ENCODE measurements at regions of chr4 and their contacts with region 1.

Region 1: DNA sequence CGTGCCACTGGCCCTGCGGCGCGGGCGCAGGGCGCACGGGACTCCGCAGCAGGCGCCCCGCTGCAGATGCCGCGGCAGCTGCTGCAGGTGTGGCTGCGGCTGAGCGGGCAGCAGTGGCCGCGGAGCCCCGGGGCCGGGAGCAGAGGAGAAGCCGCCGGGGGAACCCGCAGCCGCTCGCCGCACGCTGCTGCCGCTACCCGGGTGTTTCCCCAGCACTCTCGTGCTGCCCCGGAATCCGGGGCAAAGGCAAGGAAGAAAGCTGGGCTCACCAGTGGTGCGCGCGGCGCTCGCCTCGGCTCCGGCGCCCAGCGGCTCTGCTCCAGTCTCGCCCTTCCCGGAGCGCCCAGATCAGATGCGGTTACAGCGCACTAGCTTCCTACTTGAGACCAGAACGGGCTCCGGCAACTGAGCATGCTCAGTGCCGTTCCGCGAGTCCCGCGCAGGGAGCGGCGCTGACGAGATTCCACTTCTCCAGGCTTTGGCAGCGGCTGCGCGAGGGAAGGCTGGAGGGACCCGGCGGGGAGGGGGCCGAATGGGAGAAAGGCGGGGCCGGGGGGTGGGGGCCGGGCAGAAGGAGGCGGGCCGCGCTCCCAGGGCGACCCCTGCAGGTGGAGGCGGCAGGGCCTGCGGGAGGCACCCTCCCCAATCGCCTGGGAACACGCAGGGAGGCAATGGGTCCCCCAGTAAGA is at the start of gene APBB2:
- DNase-seq: peak; percentile 94 to 96
- ATAC-seq: peak; percentile 85 to 92 (median 89)
- H3K4me3 ChIP-seq: peak within 1 kb of the TSS; percentile 78
- H3K27ac ChIP-seq: peak within 1 kb of the TSS; percentile 69
- H3K4me1 ChIP-seq: peaks cover 10% of the 10 kb centered on the region
- H3K27me3 ChIP-seq: no peaks in the 10 kb centered on the region
- CTCF ChIP-seq: peak; percentile 84
- total RNA-seq, gene APBB2: 7.8 to 37.4 (median 12.7) TPM

Region 2: GRCh38 chr4:39657465-39657864 is 1556.8 kb before region 1 on chr4:
- intact Hi-C with region 1: no loop called
- DNase-seq: no peak
- ATAC-seq: no peak
- H3K4me3 ChIP-seq: no peak overlapping the region
- H3K27ac ChIP-seq: no peak overlapping the region
- H3K4me1 ChIP-seq: no peaks in the 10 kb centered on the region
- H3K27me3 ChIP-seq: no peaks in the 10 kb centered on the region
- CTCF ChIP-seq: no peak

Region 3: GRCh38 chr4:40916880-40917279 is 297.4 kb before region 1 on chr4:
- intact Hi-C with region 1: loop called in 1 of 2 experiments (anchors 5 kb)
- DNase-seq: peak; percentile 53 to 65
- ATAC-seq: peak; percentile 75 to 86 (median 81)
- H3K4me3 ChIP-seq: peak overlapping the region; percentile 19
- H3K27ac ChIP-seq: peak overlapping the region; percentile 81
- H3K4me1 ChIP-seq: peaks cover 37% of the 10 kb centered on the region
- H3K27me3 ChIP-seq: no peaks in the 10 kb centered on the region
- CTCF ChIP-seq: peak; percentile 45

Region 4: GRCh38 chr4:40924793-40925117 is 289.5 kb before region 1 on chr4:
- intact Hi-C with region 1: loop called (anchors 2 to 5 kb)
- DNase-seq: no peak
- ATAC-seq: no peak
- H3K4me3 ChIP-seq: no peak overlapping the region
- H3K27ac ChIP-seq: no peak overlapping the region
- H3K4me1 ChIP-seq: peaks cover 5% of the 10 kb centered on the region
- H3K27me3 ChIP-seq: no peaks in the 10 kb centered on the region
- CTCF ChIP-seq: no peak

Region 5: DNA sequence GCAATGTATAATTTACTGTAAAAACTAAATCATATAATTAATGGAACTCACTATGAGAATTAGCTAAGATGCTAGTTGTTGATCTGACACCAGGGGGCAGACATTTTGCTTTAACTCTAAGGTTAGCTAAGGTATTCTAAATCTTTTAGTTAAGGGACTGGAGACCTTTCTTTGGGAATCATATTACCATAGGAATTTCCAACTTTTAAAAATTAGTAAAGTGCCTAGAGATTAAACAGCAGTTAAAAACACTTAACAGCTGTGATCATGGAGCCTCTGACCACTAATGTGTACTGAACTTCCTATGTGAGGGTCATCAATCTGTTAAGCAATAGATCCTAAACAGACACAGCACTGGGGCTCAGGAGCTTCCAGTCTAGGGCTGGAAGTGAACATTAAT is 237.9 kb before region 1 on chr4:
- intact Hi-C with region 1: loop called (anchors 2 to 5 kb)
- DNase-seq: no peak
- ATAC-seq: peak in 2 of 4 donors; percentile 57 to 62
- H3K4me3 ChIP-seq: no peak overlapping the region
- H3K27ac ChIP-seq: no peak overlapping the region
- H3K4me1 ChIP-seq: no peaks in the 10 kb centered on the region
- H3K27me3 ChIP-seq: no peaks in the 10 kb centered on the region
- CTCF ChIP-seq: peak; percentile 64

Region 6: GRCh38 chr4:41143311-41144039 is 70.8 kb before region 1 on chr4:
- intact Hi-C with region 1: loop called in 1 of 2 experiments (anchors 5 kb)
- DNase-seq: peak; percentile 49 to 59
- ATAC-seq: peak; percentile 55 to 83 (median 74)
- H3K4me3 ChIP-seq: peak overlapping the region; percentile 3
- H3K27ac ChIP-seq: peak overlapping the region; percentile 54
- H3K4me1 ChIP-seq: peaks cover 37% of the 10 kb centered on the region
- H3K27me3 ChIP-seq: no peaks in the 10 kb centered on the region
- CTCF ChIP-seq: no peak

Measured in psoas muscle (tissue), 8 donors.